Caco-2 (cell line): ENCODE measurements at regions of chr15 and their contacts with region 1.

Region 1: DNA sequence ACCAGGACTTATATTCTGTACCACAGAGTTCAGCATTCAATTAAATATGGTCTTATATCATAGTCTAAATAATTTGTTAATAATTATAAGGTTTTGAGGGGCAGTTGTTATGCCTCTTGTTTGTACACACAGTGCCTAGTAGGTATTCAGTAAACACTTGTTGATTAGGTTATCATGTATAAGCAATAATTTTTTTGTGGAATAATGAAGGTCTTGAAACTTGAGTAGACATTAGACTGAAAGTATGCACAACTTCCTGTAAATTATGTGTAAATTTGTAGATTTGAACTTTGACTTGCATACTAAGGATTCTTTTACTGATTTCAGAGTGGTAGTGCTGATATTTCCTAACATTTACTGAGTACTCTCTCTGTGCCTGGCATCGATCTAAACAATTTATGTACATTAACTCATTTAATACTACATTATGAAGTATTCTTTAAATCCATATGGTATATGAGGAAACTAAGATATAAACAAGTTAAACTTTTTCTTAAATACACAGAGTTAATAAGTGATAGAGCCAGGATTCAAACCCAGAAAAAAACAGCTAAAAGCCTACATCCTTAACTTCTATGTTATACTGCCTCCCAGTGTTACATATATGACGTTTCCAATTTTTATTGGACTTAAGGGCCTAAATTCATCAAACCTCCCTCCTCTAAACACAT is 65.1 kb downstream of the GLCE start:
- DNase-seq: no peak
- H3K4me3 ChIP-seq: no peak overlapping the region
- H3K4me3 Mint-ChIP-seq: no peak overlapping the region
- H3K27ac Mint-ChIP-seq: no peak overlapping the region
- H3K4me1 ChIP-seq: peaks cover 16% of the 10 kb centered on the region; the same call in 1 of the 2 replicates
- H3K4me1 Mint-ChIP-seq: no peaks in the 10 kb centered on the region
- H3K27me3 ChIP-seq: no peaks in the 10 kb centered on the region
- H3K27me3 Mint-ChIP-seq: no peaks in the 10 kb centered on the region
- CTCF ChIP-seq: peak; percentile 19 to 27

Region 2: GRCh38 chr15:69200832-69201745 is 24.4 kb before region 1 on chr15:
- CTCF ChIA-PET with region 1: no interaction called
- POLR2A ChIA-PET with region 1: no interaction called
- intact Hi-C with region 1: loop called (anchors 1 kb)
- DNase-seq: peak; percentile 36 to 54
- H3K4me3 ChIP-seq: no peak overlapping the region
- H3K4me3 Mint-ChIP-seq: peak overlapping the region; percentile 3
- H3K27ac Mint-ChIP-seq: peak overlapping the region; percentile 34
- H3K4me1 ChIP-seq: peaks cover 29% of the 10 kb centered on the region
- H3K4me1 Mint-ChIP-seq: peaks cover 19% of the 10 kb centered on the region
- H3K27me3 ChIP-seq: no peaks in the 10 kb centered on the region
- H3K27me3 Mint-ChIP-seq: no peaks in the 10 kb centered on the region
- CTCF ChIP-seq: no peak